Transverse colon (tissue), 4 donors: ENCODE measurements at regions of chr19 and their contacts with region 1.

Region 1: DNA sequence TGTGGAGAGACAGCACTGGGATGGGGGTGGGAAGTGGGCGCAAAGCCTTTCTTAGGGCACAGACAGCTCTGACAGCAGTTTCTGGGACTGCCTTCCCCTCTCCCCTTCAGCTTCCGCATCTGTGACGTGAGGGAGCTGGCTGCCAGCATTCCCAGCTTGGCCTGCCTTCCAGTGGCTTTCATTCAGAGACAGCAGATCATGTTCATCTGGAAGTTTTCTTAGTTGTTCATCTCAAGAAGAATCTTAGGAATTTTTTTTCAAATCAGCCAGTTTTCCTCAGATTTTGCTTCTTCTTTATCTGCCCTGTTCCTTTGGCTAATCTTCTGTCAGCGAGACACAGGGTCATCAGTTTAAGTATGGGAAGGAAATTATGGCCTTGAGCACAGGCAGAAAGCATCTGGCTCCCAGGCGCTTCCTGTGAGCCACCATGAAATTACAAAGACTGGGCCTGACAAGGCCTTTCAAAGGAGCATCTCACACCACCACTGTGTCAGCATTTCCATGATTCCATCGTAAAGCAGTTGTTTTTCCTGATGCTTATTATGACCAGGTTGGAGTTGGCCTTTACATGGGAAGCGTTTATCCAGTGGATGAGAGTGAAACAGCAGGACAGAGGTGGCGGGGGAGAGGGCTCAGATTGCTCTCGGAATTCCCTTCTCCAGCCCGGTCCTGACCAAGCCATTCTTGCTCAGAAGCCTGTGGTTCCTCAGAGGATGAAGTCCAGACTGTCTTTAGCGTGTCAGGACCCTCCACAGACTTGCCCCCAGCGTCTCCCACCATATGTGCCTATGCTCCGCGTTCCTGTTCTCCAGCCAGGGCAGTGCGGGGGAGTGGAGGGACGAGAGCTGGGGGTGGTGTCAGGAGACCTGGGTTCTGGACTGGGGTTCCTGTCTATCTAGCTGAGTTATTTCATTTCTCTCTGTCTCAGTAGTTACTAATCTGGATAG is 43.6 kb downstream of the ARHGAP35 start:
- DNase-seq: no peak
- H3K4me3 ChIP-seq: no peak overlapping the region
- H3K27ac ChIP-seq: peak overlapping the region in 3 of 4 donors; percentile 10 to 47 (median 20)
- H3K4me1 ChIP-seq: peaks cover 0 to 44% (median 9%) of the 10 kb centered on the region in 4 donors
- H3K27me3 ChIP-seq: no peaks in the 10 kb centered on the region
- CTCF ChIP-seq: no peak
- EP300 ChIP-seq: no peak
- POLR2A ChIP-seq: no peak

Region 2: GRCh38 chr19:45994989-45995714 is 909.2 kb before region 1 on chr19 and contains the start of gene CCDC61:
- in situ Hi-C with region 1: no loop called
- intact Hi-C with region 1: loop called (anchors 5 kb)
- DNase-seq: peak; percentile 97
- H3K4me3 ChIP-seq: peak within 1 kb of the TSS; percentile 61 to 96 (median 78)
- H3K27ac ChIP-seq: peak within 1 kb of the TSS; percentile 76 to 92 (median 85)
- H3K4me1 ChIP-seq: peaks cover 9 to 14% (median 10%) of the 10 kb centered on the region in 4 donors
- H3K27me3 ChIP-seq: peaks cover 8% of the 10 kb centered on the region
- CTCF ChIP-seq: no peak
- EP300 ChIP-seq: no peak
- POLR2A ChIP-seq: peak; percentile 93
- total RNA-seq, gene CCDC61: 7.8 to 18.7 (median 10.6) TPM

Region 3: GRCh38 chr19:46713781-46714443 is 190.5 kb before region 1 on chr19:
- in situ Hi-C with region 1: no loop called
- intact Hi-C with region 1: no loop called
- DNase-seq: peak; percentile 95
- H3K4me3 ChIP-seq: peak overlapping the region; percentile 48 to 94 (median 87)
- H3K27ac ChIP-seq: peak overlapping the region; percentile 95 to 96 (median 95)
- H3K4me1 ChIP-seq: peaks cover 20 to 41% (median 31%) of the 10 kb centered on the region in 4 donors
- H3K27me3 ChIP-seq: no peaks in the 10 kb centered on the region
- CTCF ChIP-seq: no peak
- EP300 ChIP-seq: no peak
- POLR2A ChIP-seq: peak; percentile 61